Psoas muscle (tissue), 8 donors: ENCODE measurements at regions of chr6 and their contacts with region 1.

Region 1: GRCh38 chr6:164439331-164439730 is 870.1 kb downstream of the C6orf118 start:
- DNase-seq: no peak
- ATAC-seq: no peak
- H3K4me3 ChIP-seq: no peak overlapping the region
- H3K27ac ChIP-seq: no peak overlapping the region
- H3K4me1 ChIP-seq: no peaks in the 10 kb centered on the region
- H3K27me3 ChIP-seq: no peaks in the 10 kb centered on the region
- CTCF ChIP-seq: no peak

Region 2: DNA sequence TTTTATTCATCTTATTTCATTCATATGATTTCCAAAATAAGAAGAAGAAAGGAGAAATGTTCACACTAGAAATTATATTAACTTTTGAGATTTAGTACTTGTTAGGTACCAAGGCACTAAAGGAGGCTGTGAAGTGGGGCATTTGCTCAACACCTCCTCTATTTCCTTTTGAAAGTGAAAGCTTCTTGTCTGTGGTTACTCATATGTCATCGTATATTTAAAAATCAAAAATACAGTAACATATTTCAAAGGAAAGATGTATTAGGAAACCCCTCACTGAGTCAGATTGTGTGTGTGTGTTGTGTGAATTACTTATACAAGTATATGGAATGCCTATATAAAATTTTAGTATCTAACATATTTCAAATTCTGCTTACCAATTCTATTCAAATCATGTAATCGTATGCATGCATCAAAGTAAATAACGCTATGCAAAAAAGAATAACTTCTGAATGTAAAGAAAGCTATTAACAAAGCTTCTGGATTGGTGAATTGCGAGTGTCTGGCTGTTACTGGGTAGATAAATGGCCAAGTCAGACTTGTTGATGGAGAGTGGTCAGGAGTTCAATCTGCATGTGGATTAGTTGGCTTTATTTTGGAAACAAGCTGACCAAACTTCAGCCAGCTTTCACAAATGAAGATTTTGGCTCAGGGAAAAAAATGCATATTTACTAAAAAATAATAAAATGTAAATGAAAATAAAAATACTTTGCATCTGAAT is 1640.6 kb before region 1 on chr6:
- intact Hi-C with region 1: loop called in 1 of 2 experiments (anchors 5 kb)
- DNase-seq: no peak
- ATAC-seq: no peak
- H3K4me3 ChIP-seq: no peak overlapping the region
- H3K27ac ChIP-seq: no peak overlapping the region
- H3K4me1 ChIP-seq: no peaks in the 10 kb centered on the region
- H3K27me3 ChIP-seq: no peaks in the 10 kb centered on the region
- CTCF ChIP-seq: no peak

Region 3: GRCh38 chr6:164502833-164503232 is 63.5 kb after region 1 on chr6:
- intact Hi-C with region 1: no loop called
- DNase-seq: no peak
- ATAC-seq: no peak
- H3K4me3 ChIP-seq: no peak overlapping the region
- H3K27ac ChIP-seq: no peak overlapping the region
- H3K4me1 ChIP-seq: no peaks in the 10 kb centered on the region
- H3K27me3 ChIP-seq: no peaks in the 10 kb centered on the region
- CTCF ChIP-seq: no peak